ENCODE measurements at regions of chr22 and their contacts with region 1.

Region 1: GRCh38 chr22:31749636-31750364 is at the start of gene PRR14L:
- DNase-seq: peak; percentile 99
- ATAC-seq: peak; percentile 91 to 95 (median 92)
- H3K4me3 ChIP-seq: peak within 1 kb of the TSS; percentile 68 to 98 (median 90)
- H3K27ac ChIP-seq: peak within 1 kb of the TSS; percentile 32 to 98 (median 90)
- H3K4me1 ChIP-seq: peaks cover 9 to 63% (median 45%) of the 10 kb centered on the region in 9 donors
- H3K27me3 ChIP-seq: no peaks in the 10 kb centered on the region
- CTCF ChIP-seq: peak in 4 of 9 donors; percentile 10 to 38 (median 28)
- total RNA-seq, gene PRR14L: 10.9 to 19.6 (median 17.3) TPM

Region 2: DNA sequence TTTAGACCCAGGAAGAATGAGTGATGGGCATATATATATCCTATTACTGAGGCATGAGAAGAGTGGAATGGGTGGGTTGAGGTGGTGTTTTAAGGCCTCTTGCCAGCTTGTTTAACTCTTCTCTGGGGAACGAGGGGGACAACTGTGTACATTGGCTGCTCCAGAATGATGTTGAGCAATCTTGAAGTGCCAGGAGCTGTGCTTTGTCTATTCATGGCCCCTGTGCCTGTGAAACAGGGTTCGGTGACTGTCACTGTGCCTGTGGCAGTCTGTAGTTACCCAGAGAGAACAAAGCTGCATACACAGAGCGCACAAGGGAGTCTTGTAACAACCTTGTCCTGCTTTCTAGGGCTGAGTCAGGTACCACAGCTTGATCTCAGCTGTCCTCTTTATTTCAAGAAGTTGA is 526.0 kb before region 1 on chr22:
- intact Hi-C with region 1: loop called in 1 of 10 experiments (anchors 5 kb)
- DNase-seq: no peak
- ATAC-seq: no peak
- H3K4me3 ChIP-seq: no peak overlapping the region
- H3K27ac ChIP-seq: peak overlapping the region in 1 of 10 donors; percentile 88
- H3K4me1 ChIP-seq: peaks cover 0 to 99% (median 20%) of the 10 kb centered on the region in 9 donors
- H3K27me3 ChIP-seq: no peaks in the 10 kb centered on the region
- CTCF ChIP-seq: no peak

Region 3: GRCh38 chr22:31574055-31574670 is 175.6 kb before region 1 on chr22:
- intact Hi-C with region 1: no loop called
- DNase-seq: no peak
- ATAC-seq: no peak
- H3K4me3 ChIP-seq: no peak overlapping the region
- H3K27ac ChIP-seq: no peak overlapping the region
- H3K4me1 ChIP-seq: no peaks in the 10 kb centered on the region
- H3K27me3 ChIP-seq: no peaks in the 10 kb centered on the region
- CTCF ChIP-seq: no peak

Region 4: GRCh38 chr22:31661851-31662656 is 87.7 kb before region 1 on chr22 and contains the start of gene PISD:
- intact Hi-C with region 1: loop called in 4 of 10 experiments (anchors 5 to 10 kb)
- DNase-seq: peak; percentile 95
- ATAC-seq: peak; percentile 98 to 100 (median 100)
- H3K4me3 ChIP-seq: peak within 1 kb of the TSS; percentile 56 to 99 (median 90)
- H3K27ac ChIP-seq: peak within 1 kb of the TSS in 9 of 10 donors; percentile 24 to 81 (median 62)
- H3K4me1 ChIP-seq: peaks cover 2 to 20% (median 14%) of the 10 kb centered on the region in 9 donors
- H3K27me3 ChIP-seq: no peaks in the 10 kb centered on the region
- CTCF ChIP-seq: no peak
- total RNA-seq, gene PISD: 16.3 to 30.0 (median 18.7) TPM

Region 5: DNA sequence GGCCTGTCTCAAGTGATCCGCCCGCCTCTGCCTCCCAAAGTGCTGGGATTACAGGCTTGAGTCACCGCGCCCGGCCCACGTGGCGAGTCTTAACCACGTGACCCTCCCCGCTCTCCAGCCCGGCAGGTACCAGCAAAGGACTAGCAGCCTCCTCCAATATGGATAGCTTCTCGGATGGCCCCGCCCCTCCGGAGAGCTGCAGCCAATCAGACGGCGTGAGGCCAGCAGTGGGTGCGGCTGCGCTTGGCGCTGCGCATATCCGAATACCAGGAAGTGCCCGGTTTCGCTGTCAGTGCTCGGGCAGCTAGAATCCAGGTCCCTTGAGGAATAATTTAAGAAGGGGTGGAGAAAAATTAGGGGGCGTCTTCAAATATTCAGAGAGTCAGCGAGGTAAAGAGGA is 73.1 kb before region 1 on chr22:
- intact Hi-C with region 1: loop called in 1 of 10 experiments (anchors 10 kb)
- DNase-seq: peak; percentile 94
- ATAC-seq: peak; percentile 98 to 100 (median 99)
- H3K4me3 ChIP-seq: peak overlapping the region; percentile 25 to 61 (median 53)
- H3K27ac ChIP-seq: peak overlapping the region in 8 of 10 donors; percentile 11 to 88 (median 57)
- H3K4me1 ChIP-seq: peaks cover 0 to 33% (median 7%) of the 10 kb centered on the region in 9 donors
- H3K27me3 ChIP-seq: no peaks in the 10 kb centered on the region
- CTCF ChIP-seq: no peak